AG04449 (cell line): ENCODE measurements at regions of chr2 and their contacts with region 1.

Region 1: GRCh38 chr2:236180831-236181453 is 12.8 kb upstream of the GBX2 start:
- DNase-seq: no peak
- H3K4me3 ChIP-seq: no peak overlapping the region
- CTCF ChIP-seq: peak; percentile 59

Region 2: GRCh38 chr2:235766278-235766677 is 414.7 kb before region 1 on chr2:
- CTCF ChIA-PET with region 1: interaction called, 82 read pairs
- POLR2A ChIA-PET with region 1: no interaction called
- DNase-seq: no peak
- H3K4me3 ChIP-seq: no peak overlapping the region
- CTCF ChIP-seq: peak; percentile 63

Region 3: GRCh38 chr2:235779444-235779896 is 401.5 kb before region 1 on chr2:
- CTCF ChIA-PET with region 1: interaction called, 429 read pairs
- POLR2A ChIA-PET with region 1: interaction called, 9 read pairs
- DNase-seq: no peak
- H3K4me3 ChIP-seq: no peak overlapping the region
- CTCF ChIP-seq: peak; percentile 92

Region 4: DNA sequence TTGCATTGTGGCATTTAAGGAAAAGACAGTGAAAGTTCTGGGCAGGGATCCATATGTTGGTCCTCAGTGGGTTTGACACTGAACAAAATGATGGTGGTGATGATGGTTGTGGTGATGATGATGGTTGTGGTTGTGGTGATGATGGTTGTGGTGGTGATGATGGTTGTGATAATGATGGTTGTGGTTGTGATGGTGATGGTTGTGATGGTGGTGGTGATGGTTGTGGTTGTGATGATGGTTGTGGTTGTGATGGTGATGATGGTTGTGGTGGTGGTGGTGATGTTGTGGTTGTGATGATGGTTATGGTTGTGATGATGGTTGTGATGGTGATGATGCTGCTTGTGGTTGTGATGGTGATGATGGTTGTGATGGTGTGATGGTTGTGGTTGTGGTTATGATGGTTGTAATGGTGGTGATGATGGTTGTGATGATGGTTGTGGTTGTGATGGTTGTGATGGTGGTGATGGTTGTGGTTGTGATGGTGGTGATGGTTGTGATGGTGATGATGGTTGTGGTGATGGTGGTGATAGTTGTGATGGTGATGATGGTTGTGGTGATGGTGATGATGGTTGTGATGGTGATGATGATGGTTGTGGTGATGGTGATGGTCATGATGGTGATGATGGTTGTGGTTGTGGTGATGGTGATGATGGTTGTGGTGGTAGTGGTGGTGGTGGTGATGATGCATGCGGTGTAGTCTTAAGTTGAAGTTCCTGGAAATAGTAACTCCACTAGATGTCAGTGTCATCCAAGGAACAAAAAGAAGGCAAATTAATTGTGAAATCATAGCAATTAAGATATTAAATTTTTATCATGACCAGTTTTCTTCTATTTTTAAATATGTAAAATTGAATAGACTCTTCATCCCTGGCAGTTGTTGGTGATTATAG is 378.2 kb before region 1 on chr2:
- CTCF ChIA-PET with region 1: interaction called, 150 read pairs
- POLR2A ChIA-PET with region 1: no interaction called
- DNase-seq: no peak
- H3K4me3 ChIP-seq: no peak overlapping the region
- CTCF ChIP-seq: no peak

Region 5: GRCh38 chr2:236168110-236169067 is 12.6 kb before region 1 on chr2 and contains the start of gene GBX2:
- CTCF ChIA-PET with region 1: interaction called, 57 read pairs
- POLR2A ChIA-PET with region 1: no interaction called
- DNase-seq: no peak
- H3K4me3 ChIP-seq: peak within 1 kb of the TSS; percentile 49
- CTCF ChIP-seq: no peak

Region 6: GRCh38 chr2:237072067-237072931 is 891.4 kb after region 1 on chr2:
- CTCF ChIA-PET with region 1: no interaction called
- POLR2A ChIA-PET with region 1: no interaction called
- DNase-seq: no peak
- H3K4me3 ChIP-seq: no peak overlapping the region
- CTCF ChIP-seq: peak; percentile 86